ENCODE measurements at regions of chr19 and their contacts with region 1.

Region 1: GRCh38 chr19:18117692-18118378 is 20.3 kb downstream of the MAST3 start:
- DNase-seq: peak; percentile 70
- H3K4me3 Mint-ChIP-seq: peak overlapping the region; percentile 77
- H3K27ac Mint-ChIP-seq: peak overlapping the region; percentile 63
- H3K4me1 Mint-ChIP-seq: peaks cover 15% of the 10 kb centered on the region
- H3K27me3 Mint-ChIP-seq: no peaks in the 10 kb centered on the region
- CTCF ChIP-seq: no peak

Region 2: DNA sequence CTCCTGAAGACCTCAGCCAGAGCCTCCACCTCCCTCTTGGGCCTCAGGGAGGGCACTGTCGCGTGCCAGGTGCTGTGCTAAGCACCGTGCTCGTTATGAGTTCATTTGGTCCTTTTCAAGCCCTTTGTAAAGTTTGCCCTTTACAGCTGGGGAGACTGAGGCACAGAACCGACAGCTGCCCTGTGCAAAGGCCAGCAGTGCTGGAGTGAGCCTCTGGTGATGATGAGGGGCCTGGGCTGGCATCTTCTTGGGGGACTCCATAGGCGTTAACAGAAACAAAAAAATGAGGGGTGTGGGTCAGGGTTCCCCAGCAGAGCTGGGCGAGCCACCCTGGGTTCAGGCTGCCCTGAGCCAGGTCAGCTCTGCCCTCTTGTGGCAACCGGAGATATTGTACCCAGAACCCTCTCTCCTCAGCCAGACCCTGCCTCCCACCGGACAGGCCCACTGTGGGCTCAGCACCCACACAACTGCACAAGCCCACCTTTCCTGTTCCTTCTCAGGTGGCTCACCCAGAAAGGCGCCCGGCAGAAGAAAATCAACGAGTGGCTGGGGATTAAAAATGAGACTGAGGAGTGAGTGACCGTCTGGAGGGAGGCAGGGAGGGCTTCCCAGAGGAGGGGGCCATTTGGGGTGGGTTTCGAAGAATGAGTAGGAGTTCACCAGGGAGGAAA is 50.3 kb after region 1 on chr19:
- CTCF ChIA-PET with region 1: interaction called, 9 read pairs
- POLR2A ChIA-PET with region 1: no interaction called
- intact Hi-C with region 1: loop called (anchors 1 kb)
- DNase-seq: peak; percentile 51
- H3K4me3 Mint-ChIP-seq: no peak overlapping the region
- H3K27ac Mint-ChIP-seq: no peak overlapping the region
- H3K4me1 Mint-ChIP-seq: peaks cover under 1% of the 10 kb centered on the region
- H3K27me3 Mint-ChIP-seq: no peaks in the 10 kb centered on the region
- CTCF ChIP-seq: peak; percentile 76

Region 3: DNA sequence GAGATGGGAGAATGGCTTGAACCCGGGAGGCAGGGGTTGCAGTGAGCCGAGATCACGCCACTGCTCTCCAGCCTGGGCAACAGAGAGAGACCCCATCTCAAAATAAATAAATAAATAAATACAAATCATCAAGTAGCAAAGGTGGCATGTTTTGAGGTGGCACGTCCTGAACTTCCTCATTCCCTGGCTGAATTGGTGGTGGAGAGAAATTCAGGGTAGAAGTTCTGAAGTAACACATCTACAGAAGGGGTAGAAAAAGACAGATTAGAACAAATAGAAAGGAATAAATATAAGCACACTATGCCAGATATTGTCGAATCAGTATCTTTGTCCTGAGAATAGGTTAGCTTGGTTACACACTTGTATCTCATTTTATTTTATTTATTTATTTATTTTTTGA is 62.1 kb after region 1 on chr19:
- CTCF ChIA-PET with region 1: interaction called, 10 read pairs
- POLR2A ChIA-PET with region 1: interaction called, 3 read pairs
- intact Hi-C with region 1: no loop called
- DNase-seq: no peak
- H3K4me3 Mint-ChIP-seq: no peak overlapping the region
- H3K27ac Mint-ChIP-seq: no peak overlapping the region
- H3K4me1 Mint-ChIP-seq: no peaks in the 10 kb centered on the region
- H3K27me3 Mint-ChIP-seq: no peaks in the 10 kb centered on the region
- CTCF ChIP-seq: no peak